AG04449 (cell line): ENCODE measurements at regions of chr3 and their contacts with region 1.

Region 1: DNA sequence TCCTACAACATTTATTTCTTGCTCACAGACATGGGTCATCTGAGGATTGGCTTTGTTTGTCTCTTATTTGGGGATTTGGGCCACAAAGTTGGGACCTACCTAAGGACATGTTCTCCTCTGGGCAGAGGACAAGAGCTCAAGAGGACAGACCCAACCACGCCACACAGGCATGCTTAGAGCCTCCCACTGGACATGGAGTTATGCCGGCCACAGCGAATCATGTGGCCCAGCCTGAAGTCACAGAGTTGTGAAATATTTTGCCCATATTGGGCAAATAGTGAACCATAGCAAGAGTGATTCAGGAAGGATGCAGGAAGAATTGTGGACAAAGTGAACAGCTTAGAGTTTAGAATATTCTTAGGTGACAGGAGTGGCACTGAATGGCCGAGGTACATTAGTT is 9.9 kb downstream of the TRAK1 start:
- DNase-seq: peak; percentile 60
- H3K4me3 ChIP-seq: no peak overlapping the region
- CTCF ChIP-seq: no peak

Region 2: GRCh38 chr3:41900265-41900664 is 200.8 kb before region 1 on chr3:
- CTCF ChIA-PET with region 1: interaction called, 160 read pairs
- POLR2A ChIA-PET with region 1: no interaction called
- DNase-seq: no peak
- H3K4me3 ChIP-seq: no peak overlapping the region
- CTCF ChIP-seq: no peak

Region 3: DNA sequence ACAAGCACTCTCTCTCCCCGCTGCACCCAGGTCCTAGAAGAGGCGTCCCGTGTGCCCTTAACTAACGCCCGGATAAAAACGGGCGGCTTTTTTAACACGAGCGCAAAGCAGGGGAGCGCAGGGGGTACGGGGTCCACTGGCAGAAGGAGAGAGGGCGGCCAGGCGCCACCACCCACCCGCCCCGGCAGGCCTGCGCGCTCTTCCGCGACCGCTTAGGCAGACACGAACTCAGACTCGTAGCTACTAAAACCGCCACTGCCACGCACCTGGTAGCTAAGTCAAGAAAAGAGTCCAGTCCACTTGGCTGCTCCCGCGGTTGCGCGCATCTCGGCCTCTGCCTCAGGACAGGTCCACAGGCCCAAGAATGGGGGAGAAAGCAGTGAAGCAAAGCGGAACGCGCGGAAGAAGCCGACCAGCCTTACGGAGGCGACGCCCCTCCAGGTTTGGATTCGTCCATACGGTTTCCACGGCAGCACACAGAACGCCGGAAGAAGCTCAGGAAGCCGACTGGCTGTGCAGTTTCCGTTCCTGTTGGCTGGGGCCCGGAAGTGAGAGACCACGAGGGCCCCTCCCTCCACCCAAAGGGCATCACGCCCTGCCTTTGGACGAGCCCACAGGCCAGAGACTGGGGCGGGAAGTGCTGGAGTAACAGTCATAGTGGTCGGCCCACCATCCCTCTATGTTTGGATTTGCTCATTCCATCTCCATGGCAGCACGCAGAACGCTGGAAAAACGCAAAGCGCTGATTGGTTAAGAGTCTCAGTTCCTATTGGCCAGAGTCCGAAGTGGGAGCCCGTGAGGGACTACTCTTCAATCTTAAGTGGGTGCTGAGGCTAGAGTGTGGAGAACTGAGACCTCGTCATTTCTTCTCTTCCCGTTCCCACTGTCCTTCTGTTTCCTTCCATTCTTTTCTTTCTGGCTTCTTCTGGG is 139.0 kb before region 1 on chr3 and contains the start of gene ULK4:
- CTCF ChIA-PET with region 1: interaction called, 13 read pairs
- POLR2A ChIA-PET with region 1: no interaction called
- DNase-seq: peak; percentile 99
- H3K4me3 ChIP-seq: peak within 1 kb of the TSS; percentile 79
- CTCF ChIP-seq: no peak

Region 4: DNA sequence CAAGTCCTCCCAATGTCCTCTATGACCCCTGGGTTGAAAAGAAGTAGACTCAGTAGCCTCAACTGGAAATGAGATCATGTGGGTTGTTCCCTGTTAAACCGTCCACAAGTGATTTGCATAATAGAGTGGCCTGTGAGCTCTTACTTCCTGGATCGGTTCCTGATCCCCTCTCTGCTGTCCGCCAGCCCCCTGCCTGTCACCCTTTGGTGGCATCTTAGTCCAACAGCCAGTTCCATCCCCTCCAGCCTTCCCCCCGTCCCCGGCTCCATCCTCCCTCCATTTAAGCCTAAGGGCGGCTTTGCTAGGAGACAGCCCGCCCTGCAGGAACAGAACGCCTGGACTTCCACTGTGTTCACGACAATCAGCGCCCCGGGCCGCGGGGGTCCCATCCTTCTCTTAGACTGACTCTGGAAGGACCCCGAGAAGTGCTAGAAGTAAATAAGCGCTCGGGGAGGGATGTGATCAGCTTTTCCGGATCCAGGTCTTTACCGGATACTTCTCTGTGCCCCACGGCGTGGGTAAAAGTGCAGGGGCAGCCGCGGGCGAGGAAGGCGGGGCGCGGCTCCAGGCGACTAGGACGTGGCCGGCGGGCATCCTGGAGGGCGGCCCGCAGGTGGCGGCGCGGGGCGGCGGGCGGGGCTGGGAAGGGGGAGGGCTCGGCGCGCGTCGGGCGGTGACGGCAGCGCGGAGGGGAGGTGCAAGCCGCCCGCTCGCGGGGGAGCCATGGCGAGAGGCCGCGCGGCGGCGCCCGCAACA is 87.9 kb before region 1 on chr3:
- CTCF ChIA-PET with region 1: interaction called, 55 read pairs
- POLR2A ChIA-PET with region 1: no interaction called
- DNase-seq: no peak
- H3K4me3 ChIP-seq: peak overlapping the region; percentile 75
- CTCF ChIP-seq: no peak

Region 5: GRCh38 chr3:42043027-42043796 is 57.8 kb before region 1 on chr3:
- CTCF ChIA-PET with region 1: interaction called, 16 read pairs
- POLR2A ChIA-PET with region 1: no interaction called
- DNase-seq: no peak
- H3K4me3 ChIP-seq: no peak overlapping the region; the same call in 1 of the 2 replicates
- CTCF ChIP-seq: no peak

Region 6: DNA sequence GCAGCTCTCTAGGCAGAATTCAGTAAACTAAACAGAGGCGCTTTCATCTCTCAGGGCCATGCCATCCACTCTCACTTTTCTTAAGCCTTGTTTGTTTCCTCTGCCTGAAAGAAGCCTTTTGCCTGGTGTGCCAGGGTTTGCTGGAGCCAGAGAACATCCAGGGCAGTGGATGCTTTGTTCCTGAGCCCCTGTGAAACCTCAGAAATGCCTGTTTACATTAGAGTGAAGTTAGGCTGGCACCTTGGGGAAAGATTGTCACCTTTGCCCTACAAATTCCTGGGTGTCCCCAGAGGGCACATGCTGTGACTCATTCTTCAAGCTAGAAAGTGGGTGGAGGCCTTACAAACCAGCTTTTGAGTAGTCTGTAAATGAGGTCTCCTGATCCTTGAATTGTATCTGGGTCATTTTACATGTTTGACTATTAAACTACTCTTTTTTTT is 20.6 kb before region 1 on chr3:
- CTCF ChIA-PET with region 1: interaction called, 27 read pairs
- POLR2A ChIA-PET with region 1: no interaction called
- DNase-seq: no peak
- H3K4me3 ChIP-seq: no peak overlapping the region
- CTCF ChIP-seq: no peak

Region 7: GRCh38 chr3:42229942-42230688 is 129.1 kb after region 1 on chr3:
- CTCF ChIA-PET with region 1: interaction called, 15 read pairs
- POLR2A ChIA-PET with region 1: no interaction called
- DNase-seq: no peak
- H3K4me3 ChIP-seq: peak overlapping the region; percentile 23; the same call in 1 of the 2 replicates
- CTCF ChIP-seq: peak; percentile 44

Region 8: GRCh38 chr3:42336103-42336502 is 235.1 kb after region 1 on chr3:
- CTCF ChIA-PET with region 1: no interaction called
- POLR2A ChIA-PET with region 1: no interaction called
- DNase-seq: no peak
- H3K4me3 ChIP-seq: no peak overlapping the region
- CTCF ChIP-seq: no peak

Region 9: GRCh38 chr3:42490243-42490642 is 389.2 kb after region 1 on chr3:
- CTCF ChIA-PET with region 1: no interaction called
- POLR2A ChIA-PET with region 1: no interaction called
- DNase-seq: no peak
- H3K4me3 ChIP-seq: no peak overlapping the region
- CTCF ChIP-seq: no peak